SK-N-SH (cell line): ENCODE measurements at regions of chr1 and their contacts with region 1.

Region 1: DNA sequence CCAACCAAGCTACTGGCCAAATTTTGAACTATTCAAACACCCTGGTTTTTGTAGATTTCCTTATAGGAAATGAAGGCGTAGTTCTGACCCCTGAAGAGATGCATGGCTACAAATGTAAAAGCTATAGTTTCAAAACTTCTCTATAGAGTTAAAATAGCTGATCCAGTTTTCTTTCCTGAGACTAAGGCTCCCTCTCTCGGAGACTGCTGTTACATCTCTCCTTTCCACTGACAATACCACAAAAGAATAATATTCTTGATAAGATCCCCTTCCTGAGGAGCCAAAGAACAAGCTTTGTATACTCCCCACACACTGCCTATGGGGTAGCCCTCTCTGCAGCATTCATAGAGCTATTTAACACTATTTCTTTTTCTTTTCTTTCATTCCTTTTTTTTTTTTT is 6.7 kb upstream of the CFAP126 start:
- DNase-seq: peak; percentile 28
- H3K4me3 ChIP-seq: no peak overlapping the region
- H3K27ac ChIP-seq: no peak overlapping the region
- H3K4me1 ChIP-seq: no peaks in the 10 kb centered on the region
- H3K27me3 ChIP-seq: no peaks in the 10 kb centered on the region
- CTCF ChIP-seq: peak; percentile 47
- EP300 ChIP-seq: no peak
- RAD21 ChIP-seq: peak; percentile 56

Region 2: GRCh38 chr1:161209790-161210409 is 164.5 kb before region 1 on chr1:
- CTCF ChIA-PET with region 1: interaction called, 10 read pairs
- POLR2A ChIA-PET with region 1: no interaction called
- DNase-seq: peak; percentile 84
- H3K4me3 ChIP-seq: no peak overlapping the region; a peak in 1 of 4 replicates
- H3K27ac ChIP-seq: no peak overlapping the region
- H3K4me1 ChIP-seq: no peaks in the 10 kb centered on the region
- H3K27me3 ChIP-seq: no peaks in the 10 kb centered on the region
- CTCF ChIP-seq: peak; percentile 95
- EP300 ChIP-seq: no peak
- RAD21 ChIP-seq: peak; percentile 77